T-cell (primary cell): ENCODE measurements at regions of chr17 and their contacts with region 1.

Region 1: DNA sequence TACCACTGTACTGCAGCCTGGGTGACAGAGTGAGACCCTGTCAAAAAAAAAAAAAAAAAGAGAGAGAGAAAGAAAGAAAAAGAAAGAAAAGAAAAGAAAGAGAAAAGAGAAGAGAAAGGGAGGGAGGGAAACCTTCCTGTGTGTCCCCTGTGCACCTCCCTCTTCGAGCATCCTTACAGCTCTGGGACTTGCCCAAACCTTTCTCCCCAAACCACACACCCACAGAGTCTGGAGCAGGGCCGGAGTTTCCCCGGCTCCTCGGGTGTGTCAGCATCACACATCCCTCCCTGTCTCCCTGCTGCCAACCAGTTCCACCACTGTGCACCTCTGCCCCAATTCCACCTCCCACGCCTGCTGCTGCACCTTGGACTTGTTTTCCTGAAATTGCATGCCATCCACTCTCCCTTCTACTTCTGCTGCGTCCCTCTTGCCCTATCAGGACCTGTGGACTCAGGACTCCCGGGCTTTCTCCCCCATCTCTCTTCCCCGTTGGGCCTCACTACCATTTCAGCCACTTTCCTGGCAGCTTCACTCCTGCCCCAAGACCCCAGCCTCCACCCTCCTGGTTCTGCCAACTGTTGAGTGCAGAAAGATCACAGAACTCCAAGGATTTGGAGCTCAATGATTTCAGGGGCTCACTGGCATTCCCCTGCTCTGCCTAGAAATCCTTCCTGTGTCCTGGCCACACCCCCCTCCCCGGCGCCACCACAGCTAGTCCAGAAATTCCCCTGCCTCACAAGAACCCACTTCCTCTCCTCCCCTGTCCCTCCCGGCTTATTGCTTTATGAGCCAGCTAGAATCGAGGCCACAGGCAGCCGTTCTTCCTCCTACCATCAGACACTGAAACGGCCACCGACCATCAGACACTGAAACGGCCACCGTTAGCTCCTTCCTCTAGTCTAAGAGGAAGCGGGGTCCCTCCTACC is 3.7 kb upstream of the CDK3 start:
- DNase-seq: peak in 22 of 35 experiments; percentile 16 to 65 (median 23)
- ATAC-seq: peak; percentile 35 to 86 (median 50)
- H3K4me3 ChIP-seq: no peak overlapping the region
- H3K4me3 Mint-ChIP-seq: peak overlapping the region in 2 of 3 donors; percentile 15 to 57
- H3K27ac ChIP-seq: peak overlapping the region; percentile 34
- H3K27ac Mint-ChIP-seq: peak overlapping the region; percentile 82 to 83
- H3K4me1 ChIP-seq: peaks cover 6 to 15% of the 10 kb centered on the region in 2 experiments
- H3K4me1 Mint-ChIP-seq: peaks cover 13 to 16% (median 14%) of the 10 kb centered on the region in 3 donors
- H3K27me3 ChIP-seq: no peaks in the 10 kb centered on the region
- H3K27me3 Mint-ChIP-seq: no peaks in the 10 kb centered on the region

Region 2: DNA sequence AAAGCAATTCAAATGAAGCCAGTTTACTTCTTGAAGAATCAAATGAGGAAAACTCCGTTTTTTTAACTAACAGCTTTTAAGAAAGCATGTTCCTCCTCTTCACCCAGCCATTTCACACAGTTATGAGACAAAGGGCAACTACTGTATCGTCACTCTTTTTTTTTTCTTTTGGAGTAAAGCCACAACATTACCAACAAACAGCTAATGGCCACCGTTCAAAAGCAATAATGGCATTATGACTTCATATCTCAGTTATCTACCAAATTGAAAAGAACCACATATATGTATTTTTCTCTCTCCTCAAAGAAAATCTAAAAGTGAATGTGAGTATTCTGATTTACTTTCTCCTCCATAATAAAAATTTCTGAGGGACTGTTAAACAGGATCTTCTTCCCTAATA is 605.9 kb before region 1 on chr17:
- CTCF ChIA-PET with region 1: no interaction called
- POLR2A ChIA-PET with region 1: no interaction called
- DNase-seq: no peak
- ATAC-seq: no peak
- H3K4me3 ChIP-seq: no peak overlapping the region
- H3K4me3 Mint-ChIP-seq: no peak overlapping the region
- H3K27ac ChIP-seq: no peak overlapping the region
- H3K27ac Mint-ChIP-seq: peak overlapping the region in 1 of 2 donors; percentile 45
- H3K4me1 ChIP-seq: peaks cover 36% of the 10 kb centered on the region in 2 experiments
- H3K4me1 Mint-ChIP-seq: peaks cover 78 to 88% (median 85%) of the 10 kb centered on the region in 3 donors
- H3K27me3 ChIP-seq: no peaks in the 10 kb centered on the region
- H3K27me3 Mint-ChIP-seq: no peaks in the 10 kb centered on the region

Region 3: GRCh38 chr17:75981019-75981586 is 15.8 kb before region 1 on chr17:
- CTCF ChIA-PET with region 1: no interaction called
- POLR2A ChIA-PET with region 1: interaction called in 1 of 2 experiments, 12 read pairs
- DNase-seq: no peak
- ATAC-seq: no peak
- H3K4me3 ChIP-seq: no peak overlapping the region
- H3K4me3 Mint-ChIP-seq: peak overlapping the region; percentile 92 to 99 (median 95)
- H3K27ac ChIP-seq: no peak overlapping the region
- H3K27ac Mint-ChIP-seq: peak overlapping the region in 1 of 2 donors; percentile 99
- H3K4me1 ChIP-seq: peaks cover 5 to 18% of the 10 kb centered on the region in 2 experiments
- H3K4me1 Mint-ChIP-seq: peaks cover 34 to 35% (median 34%) of the 10 kb centered on the region in 3 donors
- H3K27me3 ChIP-seq: no peaks in the 10 kb centered on the region
- H3K27me3 Mint-ChIP-seq: no peaks in the 10 kb centered on the region

Region 4: DNA sequence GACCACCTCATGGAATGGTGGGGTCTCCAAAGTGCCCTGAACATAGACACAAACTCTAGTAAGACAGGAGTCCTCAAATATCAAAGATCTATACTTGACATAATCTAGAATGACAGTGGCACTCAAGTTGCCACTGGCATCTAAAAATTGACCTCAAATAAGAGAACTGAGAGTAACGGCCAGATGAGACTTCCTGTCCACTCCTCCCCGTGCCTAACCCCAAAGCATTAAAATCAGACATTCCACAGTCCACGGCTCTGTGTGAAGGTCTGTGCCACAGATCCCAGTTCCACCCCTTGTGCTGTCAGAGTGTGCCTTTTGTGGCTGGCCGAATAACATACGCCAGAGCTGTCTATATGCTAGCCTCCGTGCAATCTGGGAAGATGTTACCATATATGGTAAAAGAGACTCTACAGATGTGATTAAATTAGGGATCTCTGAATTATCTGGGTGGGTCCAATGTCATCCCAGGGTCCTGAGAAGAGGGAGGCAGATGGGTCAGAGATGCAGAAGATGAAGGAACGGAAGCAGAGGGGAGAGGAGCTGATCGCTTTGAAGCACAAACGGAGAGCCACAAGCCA is 51.2 kb after region 1 on chr17:
- CTCF ChIA-PET with region 1: no interaction called
- POLR2A ChIA-PET with region 1: no interaction called
- DNase-seq: no peak
- ATAC-seq: no peak
- H3K4me3 ChIP-seq: no peak overlapping the region
- H3K4me3 Mint-ChIP-seq: no peak overlapping the region
- H3K27ac ChIP-seq: no peak overlapping the region
- H3K27ac Mint-ChIP-seq: peak overlapping the region in 1 of 2 donors; percentile 59
- H3K4me1 ChIP-seq: peaks cover 0 to 2% of the 10 kb centered on the region in 2 experiments
- H3K4me1 Mint-ChIP-seq: peaks cover 11 to 25% (median 23%) of the 10 kb centered on the region in 3 donors
- H3K27me3 ChIP-seq: no peaks in the 10 kb centered on the region
- H3K27me3 Mint-ChIP-seq: no peaks in the 10 kb centered on the region